Activated CD8-positive, alpha-beta T cell treated with anti-CD3 and anti-CD28 coated beads, Interleukin-2, amount 10 ng/mL, durations not matched to agents 7 days and 5 days (primary cell): ENCODE measurements at regions of chr5 and their contacts with region 1.

Region 1: DNA sequence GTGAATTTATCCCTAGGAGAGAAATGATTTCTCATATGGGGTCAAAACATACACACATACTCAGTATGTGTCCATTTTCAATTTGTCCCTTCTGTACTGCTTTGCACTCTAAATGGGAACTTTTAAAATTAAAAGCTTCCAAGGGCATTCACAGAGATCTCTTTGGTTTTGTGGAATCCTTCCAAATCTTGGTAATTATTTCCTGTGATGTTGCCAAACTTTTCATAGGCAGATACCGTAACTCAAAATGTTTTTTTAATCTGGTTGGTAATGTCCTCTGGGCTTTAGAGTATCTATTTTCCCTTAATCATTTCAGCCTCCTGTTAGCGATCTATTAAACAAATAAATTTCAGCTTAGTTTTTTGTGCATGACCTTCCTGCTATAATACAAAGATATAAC is 282.4 kb downstream of the ARHGEF28 start:
- DNase-seq: no peak
- ATAC-seq: no peak
- H3K4me3 Mint-ChIP-seq: no peak overlapping the region
- H3K27ac Mint-ChIP-seq: no peak overlapping the region
- H3K4me1 Mint-ChIP-seq: no peaks in the 10 kb centered on the region
- H3K27me3 Mint-ChIP-seq: peaks cover 11% of the 10 kb centered on the region

Region 2: DNA sequence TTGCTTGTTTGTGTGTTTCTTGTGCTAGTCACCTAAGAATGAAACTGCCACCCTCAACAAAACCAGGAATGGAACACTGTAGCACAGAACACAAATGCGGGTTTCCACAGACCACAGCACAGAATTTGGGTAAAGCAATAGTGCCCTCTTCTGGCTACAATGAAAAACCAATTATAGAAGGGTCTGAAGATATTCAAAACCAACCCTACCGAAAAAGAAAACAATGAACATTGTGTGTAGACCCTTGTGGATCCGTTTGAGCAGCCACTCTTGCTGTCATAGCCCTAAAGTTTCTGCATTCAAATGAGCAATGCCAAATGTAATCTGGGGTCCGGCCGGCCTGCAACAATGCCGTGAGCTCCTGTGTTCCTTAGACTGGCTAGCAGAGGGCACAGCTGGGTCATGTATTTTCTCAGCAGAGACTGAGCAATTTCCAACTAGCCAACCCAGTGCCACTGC is 740.5 kb after region 1 on chr5:
- CTCF ChIA-PET with region 1: interaction called, 38 read pairs
- POLR2A ChIA-PET with region 1: no interaction called
- DNase-seq: peak; percentile 52
- ATAC-seq: peak; percentile 84
- H3K4me3 Mint-ChIP-seq: no peak overlapping the region
- H3K27ac Mint-ChIP-seq: no peak overlapping the region
- H3K4me1 Mint-ChIP-seq: peaks cover 2% of the 10 kb centered on the region
- H3K27me3 Mint-ChIP-seq: peaks cover 12% of the 10 kb centered on the region